H1 (cell line): ENCODE measurements at regions of chr11 and their contacts with region 1.

Region 1: DNA sequence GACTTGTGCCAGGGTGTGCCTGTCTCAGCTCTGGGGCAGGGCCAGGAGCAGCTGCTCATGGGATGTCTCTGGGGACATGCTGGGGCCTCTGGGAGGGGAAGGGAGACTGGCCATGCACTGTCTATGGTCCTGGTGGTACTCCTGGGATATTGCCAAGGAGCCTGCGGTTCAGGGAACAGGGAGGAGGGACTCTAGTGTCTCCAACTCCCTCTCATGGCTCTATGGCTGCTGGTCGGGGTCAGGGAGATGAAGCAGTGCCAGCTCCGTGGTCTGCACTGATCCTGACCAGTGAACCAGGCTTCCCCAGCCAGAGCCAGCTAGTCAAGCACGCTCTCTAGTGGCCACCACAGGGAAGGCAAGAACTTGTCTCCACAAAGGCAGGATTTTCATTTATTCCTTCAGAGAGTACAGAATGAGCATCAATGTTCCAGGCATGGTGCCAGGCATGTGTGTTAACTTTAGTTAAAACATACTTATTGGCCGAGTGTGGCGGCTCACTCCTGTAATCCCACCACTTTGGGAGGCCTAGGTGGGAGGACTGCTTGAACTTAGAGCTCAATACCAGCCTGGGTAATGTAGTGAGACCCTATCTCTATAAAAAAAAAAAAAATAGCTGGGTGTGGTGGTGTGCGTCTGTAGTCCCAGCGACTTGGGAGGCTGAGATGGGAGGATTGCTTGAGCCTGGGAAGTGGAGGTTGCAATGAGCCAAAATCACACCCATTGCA is 2.5 kb upstream of the BEST1 start:
- DNase-seq: peak; percentile 60 to 86
- H3K4me3 ChIP-seq: no peak overlapping the region
- H3K27ac ChIP-seq: no peak overlapping the region
- H3K4me1 ChIP-seq: no peaks in the 10 kb centered on the region; a peak in 1 of 7 replicates
- H3K27me3 ChIP-seq: no peaks in the 10 kb centered on the region
- CTCF ChIP-seq: peak; percentile 89 to 99 (median 98)
- EP300 ChIP-seq: no peak
- POLR2A ChIP-seq: no peak
- RAD21 ChIP-seq: peak; percentile 100

Region 2: GRCh38 chr11:61885166-61885778 is 62.4 kb before region 1 on chr11:
- CTCF ChIA-PET with region 1: interaction called, 658 read pairs
- POLR2A ChIA-PET with region 1: interaction called, 5 read pairs
- DNase-seq: peak in 1 of 2 experiments; percentile 45
- H3K4me3 ChIP-seq: no peak overlapping the region
- H3K27ac ChIP-seq: no peak overlapping the region
- H3K4me1 ChIP-seq: peaks cover 0 to 15% (median 6%) of the 10 kb centered on the region in 4 experiments; a peak in 5 of 7 replicates
- H3K27me3 ChIP-seq: no peaks in the 10 kb centered on the region
- CTCF ChIP-seq: no peak
- EP300 ChIP-seq: no peak
- POLR2A ChIP-seq: no peak
- RAD21 ChIP-seq: 0 out of 4 replicates have a peak, but pooled peaks of 1 of the 2 experiments have one; percentile 2

Region 3: DNA sequence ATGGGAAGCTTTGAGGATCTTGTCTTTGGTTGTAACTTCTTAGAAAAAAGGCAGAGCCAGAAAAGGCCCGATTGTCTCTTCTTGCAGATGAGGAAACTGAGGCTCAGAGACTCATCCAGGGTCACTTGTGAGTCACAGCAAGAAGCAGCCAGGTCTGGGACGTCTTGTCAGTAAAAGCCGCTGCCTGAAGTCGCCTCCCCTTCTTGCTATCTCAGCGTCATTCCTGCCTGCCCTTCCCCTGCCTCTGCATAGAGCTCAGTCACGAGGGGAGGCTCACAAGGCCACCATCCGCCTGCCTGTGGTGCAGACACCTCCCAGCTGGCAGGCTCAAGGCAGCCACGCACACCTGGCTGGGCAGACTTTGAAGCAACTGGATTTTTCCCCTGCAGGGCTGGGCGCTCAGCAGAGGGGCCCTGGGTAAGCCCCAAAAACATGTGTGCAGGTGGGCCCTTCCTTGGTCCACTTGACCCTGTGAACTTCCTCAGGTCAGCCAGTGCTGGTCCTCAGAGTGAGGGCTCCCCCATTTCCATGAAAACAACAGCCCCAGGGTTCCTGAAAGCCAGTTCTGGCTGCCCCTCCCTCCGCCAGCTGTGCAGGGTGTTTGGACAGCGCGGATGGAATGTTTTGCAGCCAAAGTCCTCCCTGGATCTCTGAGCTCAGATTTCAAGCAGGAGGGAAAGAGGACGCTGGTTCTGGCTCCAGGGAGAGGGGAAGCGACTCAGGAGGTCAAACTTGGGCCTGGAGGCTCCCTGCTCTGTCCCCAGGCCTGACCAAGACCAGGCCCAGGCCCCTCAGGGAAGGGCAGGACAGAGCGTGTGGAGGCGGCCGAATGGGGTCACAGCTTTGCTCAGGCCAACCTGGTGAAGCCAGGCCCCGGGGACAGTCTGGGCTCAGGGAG is 24.2 kb before region 1 on chr11:
- CTCF ChIA-PET with region 1: interaction called, 65 read pairs
- POLR2A ChIA-PET with region 1: interaction called, 13 read pairs
- DNase-seq: peak in 1 of 2 experiments; percentile 62
- H3K4me3 ChIP-seq: no peak overlapping the region
- H3K27ac ChIP-seq: peak overlapping the region; percentile 52; the same call in 1 of the 2 replicates
- H3K4me1 ChIP-seq: peaks cover 6 to 18% (median 16%) of the 10 kb centered on the region in 4 experiments
- H3K27me3 ChIP-seq: peaks cover 0 to 9% (median 5%) of the 10 kb centered on the region in 4 experiments; a peak in 5 of 7 replicates
- CTCF ChIP-seq: no peak
- EP300 ChIP-seq: no peak
- POLR2A ChIP-seq: 0 out of 3 replicates have a peak, but pooled peaks of 1 of the 2 experiments have one; percentile 22
- RAD21 ChIP-seq: no peak

Region 4: DNA sequence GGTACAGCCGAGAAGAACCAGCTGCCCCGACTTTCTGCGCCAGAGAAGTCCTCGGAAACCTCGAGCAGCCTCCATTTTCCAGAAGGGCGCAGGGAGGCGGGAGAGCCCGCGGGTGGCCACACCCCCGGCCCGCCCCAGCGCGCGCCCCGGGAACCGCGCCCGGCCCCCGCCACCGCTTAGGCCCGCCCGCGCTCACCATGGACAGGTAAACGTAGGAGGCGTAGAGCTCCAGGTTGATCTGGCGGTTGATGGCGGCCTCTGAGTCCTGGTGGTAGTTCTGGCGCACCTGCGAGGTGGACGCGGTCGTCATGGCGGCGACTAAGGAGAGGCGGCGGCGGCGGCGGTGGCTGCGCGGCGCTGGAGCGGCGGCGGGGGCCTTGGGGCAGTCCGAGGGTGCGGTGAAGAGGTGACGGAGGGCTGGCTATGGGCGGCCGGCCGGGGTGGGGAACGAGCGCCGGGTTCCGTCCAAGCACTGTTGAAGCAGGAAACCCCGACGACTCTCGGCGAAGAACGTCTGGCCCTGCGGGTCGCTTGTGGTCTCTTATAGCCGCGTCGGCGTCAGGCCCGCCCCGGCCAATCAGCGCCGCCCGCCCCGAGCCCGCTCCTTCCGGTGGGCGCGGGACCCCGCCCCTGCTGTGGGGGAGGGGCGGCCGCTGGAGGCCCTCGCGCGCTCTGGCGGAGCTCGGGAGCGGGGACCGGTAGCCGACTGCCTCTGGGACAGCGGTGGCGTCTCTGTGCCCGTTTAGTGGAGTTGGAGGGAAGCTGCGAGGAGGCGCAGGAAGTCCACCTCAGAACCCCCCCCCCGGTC is 19.7 kb after region 1 on chr11 and contains the start of gene FTH1:
- CTCF ChIA-PET with region 1: interaction called, 38 read pairs
- POLR2A ChIA-PET with region 1: interaction called, 458 read pairs
- DNase-seq: peak; percentile 56 to 90
- H3K4me3 ChIP-seq: peak within 1 kb of the TSS; percentile 89 to 97 (median 96)
- H3K27ac ChIP-seq: peak within 1 kb of the TSS; percentile 96
- H3K4me1 ChIP-seq: peaks cover 9 to 20% (median 13%) of the 10 kb centered on the region in 4 experiments
- H3K27me3 ChIP-seq: no peaks in the 10 kb centered on the region
- CTCF ChIP-seq: no peak
- EP300 ChIP-seq: peak in 1 of 2 experiments; percentile 57; a peak in 2 of 3 replicates
- POLR2A ChIP-seq: peak; percentile 90 to 96
- RAD21 ChIP-seq: no peak
- total RNA-seq, gene FTH1: 1,461 and 1,535 TPM in 2 replicates

Region 5: DNA sequence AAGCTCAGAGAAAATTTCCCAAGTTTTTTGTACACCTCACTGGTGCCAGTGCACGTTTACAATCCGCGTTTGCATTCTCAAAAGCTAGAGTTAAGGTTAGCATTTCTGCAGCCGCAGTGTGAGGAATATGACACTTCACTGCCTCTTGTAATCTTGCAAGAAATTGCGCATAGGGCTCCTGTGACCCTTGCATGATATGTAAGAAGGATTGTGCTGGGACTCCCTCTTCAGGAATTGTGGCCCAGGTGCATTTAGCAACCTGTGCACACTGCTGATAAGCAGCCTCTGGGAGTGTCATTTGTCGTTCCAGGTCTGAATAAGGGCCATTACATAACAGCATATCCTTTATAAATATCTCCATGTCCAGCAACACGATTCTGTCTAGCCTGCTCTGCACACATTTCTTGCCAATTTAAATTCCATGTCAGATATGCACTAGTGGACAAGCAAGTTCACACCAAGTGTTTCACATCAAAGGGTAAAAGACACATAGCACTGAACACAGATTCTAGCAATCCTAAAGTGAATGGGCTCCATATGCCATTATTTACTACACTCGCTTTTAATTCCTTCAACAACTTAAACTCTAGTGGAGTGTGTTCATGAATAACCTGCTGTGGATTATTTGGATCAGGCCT is 107.0 kb after region 1 on chr11:
- CTCF ChIA-PET with region 1: interaction called, 14 read pairs
- POLR2A ChIA-PET with region 1: interaction called, 3 read pairs
- DNase-seq: no peak
- H3K4me3 ChIP-seq: no peak overlapping the region
- H3K27ac ChIP-seq: no peak overlapping the region
- H3K4me1 ChIP-seq: no peaks in the 10 kb centered on the region
- H3K27me3 ChIP-seq: no peaks in the 10 kb centered on the region
- CTCF ChIP-seq: peak; percentile 29 to 59 (median 57)
- EP300 ChIP-seq: no peak
- POLR2A ChIP-seq: no peak
- RAD21 ChIP-seq: peak; percentile 65 to 78

Region 6: DNA sequence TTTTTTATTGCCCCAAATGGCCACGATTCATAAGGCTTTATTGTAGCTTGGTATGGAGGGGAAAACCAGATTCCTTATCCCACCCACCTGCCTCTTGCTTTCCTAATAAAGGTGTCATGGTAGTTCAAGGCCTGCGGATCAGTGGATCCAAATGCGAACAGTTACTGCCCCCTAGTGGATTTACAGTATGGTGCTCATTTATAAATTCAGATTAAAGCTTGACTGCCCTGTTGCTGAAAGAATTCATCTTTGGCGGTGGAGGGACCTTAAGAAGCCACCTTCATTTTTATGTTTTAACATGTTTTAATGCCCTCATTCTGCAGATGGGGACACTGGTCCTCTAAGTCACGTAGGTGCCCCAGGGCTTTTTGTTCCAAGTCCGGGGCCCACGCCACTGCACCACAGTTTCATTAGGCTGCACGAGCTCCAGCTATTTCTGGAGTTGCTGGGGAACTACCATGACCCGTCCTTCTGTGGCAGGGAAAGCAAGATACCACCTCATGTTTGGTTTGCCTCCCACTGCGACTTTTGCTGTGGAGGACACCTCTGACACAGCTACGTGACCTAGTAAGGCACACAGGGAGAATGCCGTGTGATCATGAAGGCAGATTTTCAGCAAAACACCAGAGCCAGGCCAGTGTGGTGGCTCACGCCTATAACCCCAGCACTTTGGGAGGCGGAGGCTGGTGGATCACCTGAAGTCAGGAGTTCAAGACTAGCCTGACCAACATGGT is 160.5 kb after region 1 on chr11:
- CTCF ChIA-PET with region 1: interaction called, 74 read pairs
- POLR2A ChIA-PET with region 1: interaction called, 9 read pairs
- DNase-seq: peak in 1 of 2 experiments; percentile 19
- H3K4me3 ChIP-seq: no peak overlapping the region
- H3K27ac ChIP-seq: no peak overlapping the region
- H3K4me1 ChIP-seq: no peaks in the 10 kb centered on the region; a peak in 1 of 7 replicates
- H3K27me3 ChIP-seq: no peaks in the 10 kb centered on the region
- CTCF ChIP-seq: peak in 2 of 3 experiments; percentile 77 to 83; a peak in 3 of 4 replicates
- EP300 ChIP-seq: no peak
- POLR2A ChIP-seq: no peak
- RAD21 ChIP-seq: peak; percentile 93 to 94

Region 7: GRCh38 chr11:62201370-62201769 is 253.7 kb after region 1 on chr11:
- CTCF ChIA-PET with region 1: no interaction called
- POLR2A ChIA-PET with region 1: no interaction called
- DNase-seq: no peak
- H3K4me3 ChIP-seq: no peak overlapping the region
- H3K27ac ChIP-seq: no peak overlapping the region
- H3K4me1 ChIP-seq: no peaks in the 10 kb centered on the region
- H3K27me3 ChIP-seq: no peaks in the 10 kb centered on the region
- CTCF ChIP-seq: no peak
- EP300 ChIP-seq: no peak
- POLR2A ChIP-seq: no peak
- RAD21 ChIP-seq: no peak